ENCODE measurements at regions of chr17 and their contacts with region 1.

Region 1: GRCh38 chr17:46193626-46194392 is 580 bp upstream of the KANSL1 start:
- H3K4me3 ChIP-seq: peak overlapping the region; percentile 87
- H3K27ac ChIP-seq: peak overlapping the region; percentile 99
- H3K4me1 ChIP-seq: peaks cover 33% of the 10 kb centered on the region
- CTCF ChIP-seq: peak; percentile 10

Region 2: GRCh38 chr17:46044286-46044928 is 149.4 kb before region 1 on chr17:
- CTCF ChIA-PET with region 1: interaction called, 26 read pairs
- POLR2A ChIA-PET with region 1: interaction called, 9 read pairs
- H3K4me3 ChIP-seq: no peak overlapping the region
- H3K27ac ChIP-seq: no peak overlapping the region
- H3K4me1 ChIP-seq: peaks cover 7% of the 10 kb centered on the region; the same call in 1 of the 2 replicates
- CTCF ChIP-seq: peak; percentile 84

Region 3: GRCh38 chr17:46078675-46079074 is 115.1 kb before region 1 on chr17:
- CTCF ChIA-PET with region 1: interaction called, 10 read pairs
- POLR2A ChIA-PET with region 1: no interaction called
- H3K4me3 ChIP-seq: no peak overlapping the region
- H3K27ac ChIP-seq: peak overlapping the region; percentile 20; the same call in 1 of the 2 replicates
- H3K4me1 ChIP-seq: peaks cover 34% of the 10 kb centered on the region
- CTCF ChIP-seq: no peak

Region 4: GRCh38 chr17:46115699-46116098 is 78.1 kb before region 1 on chr17:
- CTCF ChIA-PET with region 1: interaction called, 16 read pairs
- POLR2A ChIA-PET with region 1: no interaction called
- H3K4me3 ChIP-seq: no peak overlapping the region
- H3K27ac ChIP-seq: no peak overlapping the region
- H3K4me1 ChIP-seq: peaks cover 58% of the 10 kb centered on the region
- CTCF ChIP-seq: no peak

Region 5: DNA sequence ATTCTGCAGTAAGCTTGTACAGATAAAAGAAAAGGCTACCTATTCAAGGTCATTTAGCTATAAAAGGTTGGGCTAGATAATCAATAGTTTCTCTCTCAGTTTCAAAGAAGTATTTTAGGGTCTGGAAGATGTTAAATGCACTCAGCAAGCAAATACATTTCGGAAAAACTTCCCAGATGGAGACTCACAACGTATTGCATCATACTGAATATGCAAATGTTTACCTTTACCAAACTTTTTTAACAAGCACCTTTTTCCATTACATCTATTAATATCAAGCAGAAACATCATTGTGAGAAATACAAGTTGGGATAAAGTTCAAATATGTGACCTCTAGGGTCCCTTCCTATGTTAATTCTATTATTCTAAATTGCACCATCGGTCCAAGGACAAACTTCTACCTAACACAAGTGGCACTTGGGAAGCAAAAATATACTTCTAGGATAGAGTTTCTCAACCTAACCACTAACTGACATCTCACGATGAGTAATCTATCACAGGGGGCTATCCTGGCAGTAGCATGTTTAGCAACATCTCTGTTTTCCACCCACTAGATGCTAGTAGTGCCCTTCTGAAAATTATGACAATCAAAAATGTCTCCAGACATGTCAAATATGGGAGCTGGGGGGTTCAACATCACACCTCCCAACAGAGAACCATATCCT is 15.1 kb before region 1 on chr17:
- CTCF ChIA-PET with region 1: interaction called, 19 read pairs
- POLR2A ChIA-PET with region 1: interaction called, 4 read pairs
- H3K4me3 ChIP-seq: no peak overlapping the region
- H3K27ac ChIP-seq: no peak overlapping the region
- H3K4me1 ChIP-seq: peaks cover 45% of the 10 kb centered on the region
- CTCF ChIP-seq: no peak

Region 6: GRCh38 chr17:46264456-46265198 is 70.8 kb after region 1 on chr17:
- CTCF ChIA-PET with region 1: interaction called, 5 read pairs
- POLR2A ChIA-PET with region 1: interaction called, 10 read pairs
- H3K4me3 ChIP-seq: no peak overlapping the region
- H3K27ac ChIP-seq: peak overlapping the region; percentile 45
- H3K4me1 ChIP-seq: peaks cover 17% of the 10 kb centered on the region
- CTCF ChIP-seq: no peak

Measured in HEK293 (cell line).